WTC11 (cell line): ENCODE measurements at regions of chr3 and their contacts with region 1.

Region 1: DNA sequence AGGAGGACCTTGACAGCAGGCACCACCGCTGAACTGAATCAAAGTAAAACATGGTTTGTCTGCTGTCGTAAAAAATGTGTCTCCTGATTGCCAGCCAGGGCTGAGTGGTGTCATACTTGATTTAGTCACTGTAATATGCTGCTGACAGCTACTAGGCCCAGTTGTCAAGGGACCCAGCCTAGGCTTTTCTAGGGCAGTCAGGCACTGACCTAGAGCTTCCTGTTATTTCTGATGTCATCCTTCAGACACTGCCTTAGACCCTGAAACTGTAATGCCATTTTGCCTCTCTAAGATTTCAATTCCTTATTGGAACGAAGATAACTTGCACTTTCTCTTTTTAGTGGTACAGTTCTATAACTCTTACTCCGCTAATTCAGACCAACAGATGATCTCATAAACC is 2.6 kb upstream of the MRPL3 start:
- DNase-seq: no peak
- ATAC-seq: no peak
- H3K4me3 Mint-ChIP-seq: no peak overlapping the region
- H3K27ac Mint-ChIP-seq: no peak overlapping the region
- H3K4me1 Mint-ChIP-seq: peaks cover 10% of the 10 kb centered on the region
- H3K27me3 Mint-ChIP-seq: peaks cover 35% of the 10 kb centered on the region
- CTCF ChIP-seq: no peak

Region 2: GRCh38 chr3:130557336-130558035 is 947.9 kb before region 1 on chr3:
- CTCF ChIA-PET with region 1: no interaction called
- POLR2A ChIA-PET with region 1: interaction called, 10 read pairs
- DNase-seq: no peak
- ATAC-seq: no peak
- H3K4me3 Mint-ChIP-seq: no peak overlapping the region
- H3K27ac Mint-ChIP-seq: no peak overlapping the region
- H3K4me1 Mint-ChIP-seq: peaks cover 3% of the 10 kb centered on the region; the same call in 1 of the 2 replicates
- H3K27me3 Mint-ChIP-seq: no peaks in the 10 kb centered on the region
- CTCF ChIP-seq: no peak